ENCODE measurements at regions of chr9 and their contacts with region 1.

Region 1: GRCh38 chr9:129139993-129140396 is 28.8 kb downstream of the PTPA start:
- DNase-seq: peak; percentile 99
- H3K4me3 Mint-ChIP-seq: peak overlapping the region; percentile 74
- H3K27ac Mint-ChIP-seq: peak overlapping the region; percentile 97
- H3K4me1 Mint-ChIP-seq: peaks cover 30% of the 10 kb centered on the region
- H3K27me3 Mint-ChIP-seq: no peaks in the 10 kb centered on the region
- CTCF ChIP-seq: no peak

Region 2: GRCh38 chr9:129125476-129125875 is 14.5 kb before region 1 on chr9:
- CTCF ChIA-PET with region 1: interaction called, 48 read pairs
- POLR2A ChIA-PET with region 1: interaction called, 19 read pairs
- intact Hi-C with region 1: loop called (anchors 1 kb)
- DNase-seq: peak; percentile 97
- H3K4me3 Mint-ChIP-seq: no peak overlapping the region
- H3K27ac Mint-ChIP-seq: peak overlapping the region; percentile 16
- H3K4me1 Mint-ChIP-seq: peaks cover 10% of the 10 kb centered on the region
- H3K27me3 Mint-ChIP-seq: no peaks in the 10 kb centered on the region
- CTCF ChIP-seq: no peak

Region 3: GRCh38 chr9:129166623-129167557 is 26.9 kb after region 1 on chr9:
- CTCF ChIA-PET with region 1: interaction called, 103 read pairs
- POLR2A ChIA-PET with region 1: interaction called, 154 read pairs
- intact Hi-C with region 1: loop called (anchors 1 kb)
- DNase-seq: peak; percentile 81
- H3K4me3 Mint-ChIP-seq: peak overlapping the region; percentile 63
- H3K27ac Mint-ChIP-seq: peak overlapping the region; percentile 87
- H3K4me1 Mint-ChIP-seq: peaks cover 25% of the 10 kb centered on the region
- H3K27me3 Mint-ChIP-seq: no peaks in the 10 kb centered on the region
- CTCF ChIP-seq: no peak

Region 4: GRCh38 chr9:129482521-129483414 is 342.8 kb after region 1 on chr9:
- CTCF ChIA-PET with region 1: interaction called, 4 read pairs
- POLR2A ChIA-PET with region 1: interaction called, 21 read pairs
- intact Hi-C with region 1: no loop called
- DNase-seq: peak; percentile 92
- H3K4me3 Mint-ChIP-seq: peak overlapping the region; percentile 70
- H3K27ac Mint-ChIP-seq: peak overlapping the region; percentile 93
- H3K4me1 Mint-ChIP-seq: peaks cover 47% of the 10 kb centered on the region
- H3K27me3 Mint-ChIP-seq: no peaks in the 10 kb centered on the region
- CTCF ChIP-seq: no peak

Region 5: GRCh38 chr9:129610473-129611301 is 470.7 kb after region 1 on chr9:
- CTCF ChIA-PET with region 1: interaction called, 30 read pairs
- POLR2A ChIA-PET with region 1: interaction called, 13 read pairs
- intact Hi-C with region 1: loop called (anchors 1 kb)
- DNase-seq: peak; percentile 66
- H3K4me3 Mint-ChIP-seq: peak overlapping the region; percentile 75
- H3K27ac Mint-ChIP-seq: no peak overlapping the region
- H3K4me1 Mint-ChIP-seq: peaks cover 13% of the 10 kb centered on the region
- H3K27me3 Mint-ChIP-seq: no peaks in the 10 kb centered on the region
- CTCF ChIP-seq: peak; percentile 88

Region 6: DNA sequence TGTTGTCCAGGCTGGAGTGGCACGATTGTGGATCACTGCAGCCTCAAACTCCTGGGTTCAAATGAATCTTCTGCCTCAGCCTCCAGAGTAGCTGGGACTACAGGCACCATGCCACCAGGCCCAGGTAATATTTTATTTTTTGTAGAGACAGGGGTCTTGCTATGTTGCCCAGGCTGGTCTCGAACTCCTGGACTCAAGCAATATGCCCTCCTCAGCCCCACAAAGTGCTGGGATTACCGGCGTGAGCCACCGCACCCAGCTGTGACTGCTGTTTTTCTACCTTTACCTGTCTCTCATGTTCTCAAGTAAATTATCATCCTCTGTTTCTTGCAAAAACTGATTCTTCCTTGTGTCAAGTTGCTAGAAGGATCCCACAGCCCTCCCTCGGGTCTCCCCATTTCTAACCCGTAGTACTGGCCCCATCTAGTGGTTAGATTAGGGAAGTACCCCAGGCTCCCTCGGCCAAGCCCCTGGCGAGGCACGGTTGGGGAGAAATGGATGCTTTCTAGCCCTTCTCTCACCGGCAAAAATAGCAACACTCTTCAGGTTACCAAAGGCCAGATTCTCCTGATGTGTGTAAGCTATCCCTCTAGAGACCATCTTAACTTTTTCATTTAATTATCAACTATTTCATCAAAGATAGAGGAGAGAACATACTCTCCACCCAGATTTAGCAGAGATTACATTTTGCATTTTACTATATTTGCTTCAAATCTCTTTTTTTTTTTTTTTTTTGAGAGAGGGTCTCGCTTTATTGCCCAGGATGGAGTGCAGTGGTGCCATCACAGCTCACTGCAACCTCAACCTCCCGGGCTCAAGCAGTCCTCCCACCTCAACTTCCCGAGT is 643.7 kb after region 1 on chr9:
- CTCF ChIA-PET with region 1: no interaction called
- POLR2A ChIA-PET with region 1: no interaction called
- intact Hi-C with region 1: loop called (anchors 2 kb)
- DNase-seq: peak; percentile 82
- H3K4me3 Mint-ChIP-seq: no peak overlapping the region
- H3K27ac Mint-ChIP-seq: no peak overlapping the region
- H3K4me1 Mint-ChIP-seq: peaks cover 13% of the 10 kb centered on the region
- H3K27me3 Mint-ChIP-seq: peaks cover 8% of the 10 kb centered on the region
- CTCF ChIP-seq: peak; percentile 95

Measured in MCF 10A (cell line).